BJ (cell line): ENCODE measurements at regions of chr11 and their contacts with region 1.

Region 1: DNA sequence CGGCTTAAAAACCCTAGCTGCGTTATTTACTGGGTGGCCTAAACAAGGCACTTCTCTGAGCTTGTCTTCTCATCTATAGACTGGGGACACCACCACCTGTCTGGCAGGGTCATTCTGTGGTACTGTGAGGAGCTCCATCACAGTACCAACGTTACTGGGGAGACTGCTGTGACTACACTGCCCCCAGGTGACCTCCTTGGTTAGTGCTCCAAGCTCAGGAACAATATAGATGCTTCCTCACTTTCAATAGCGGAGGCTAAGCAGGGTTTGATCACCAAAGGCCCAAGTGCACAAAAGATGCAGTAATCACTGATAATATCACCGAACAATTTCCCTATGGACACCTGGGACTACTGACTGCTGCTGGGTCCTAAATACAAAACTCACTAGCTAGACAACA is 18.8 kb downstream of the PRPF19 start:
- DNase-seq: no peak
- H3K4me3 ChIP-seq: no peak overlapping the region
- H3K27me3 ChIP-seq: no peaks in the 10 kb centered on the region
- CTCF ChIP-seq: peak; percentile 72

Region 2: GRCh38 chr11:60775420-60775961 is 112.1 kb before region 1 on chr11:
- CTCF ChIA-PET with region 1: interaction called, 36 read pairs
- POLR2A ChIA-PET with region 1: no interaction called
- DNase-seq: peak; percentile 50
- H3K4me3 ChIP-seq: no peak overlapping the region
- H3K27me3 ChIP-seq: peaks cover 1% of the 10 kb centered on the region; the same call in 1 of the 2 replicates
- CTCF ChIP-seq: peak; percentile 92

Region 3: DNA sequence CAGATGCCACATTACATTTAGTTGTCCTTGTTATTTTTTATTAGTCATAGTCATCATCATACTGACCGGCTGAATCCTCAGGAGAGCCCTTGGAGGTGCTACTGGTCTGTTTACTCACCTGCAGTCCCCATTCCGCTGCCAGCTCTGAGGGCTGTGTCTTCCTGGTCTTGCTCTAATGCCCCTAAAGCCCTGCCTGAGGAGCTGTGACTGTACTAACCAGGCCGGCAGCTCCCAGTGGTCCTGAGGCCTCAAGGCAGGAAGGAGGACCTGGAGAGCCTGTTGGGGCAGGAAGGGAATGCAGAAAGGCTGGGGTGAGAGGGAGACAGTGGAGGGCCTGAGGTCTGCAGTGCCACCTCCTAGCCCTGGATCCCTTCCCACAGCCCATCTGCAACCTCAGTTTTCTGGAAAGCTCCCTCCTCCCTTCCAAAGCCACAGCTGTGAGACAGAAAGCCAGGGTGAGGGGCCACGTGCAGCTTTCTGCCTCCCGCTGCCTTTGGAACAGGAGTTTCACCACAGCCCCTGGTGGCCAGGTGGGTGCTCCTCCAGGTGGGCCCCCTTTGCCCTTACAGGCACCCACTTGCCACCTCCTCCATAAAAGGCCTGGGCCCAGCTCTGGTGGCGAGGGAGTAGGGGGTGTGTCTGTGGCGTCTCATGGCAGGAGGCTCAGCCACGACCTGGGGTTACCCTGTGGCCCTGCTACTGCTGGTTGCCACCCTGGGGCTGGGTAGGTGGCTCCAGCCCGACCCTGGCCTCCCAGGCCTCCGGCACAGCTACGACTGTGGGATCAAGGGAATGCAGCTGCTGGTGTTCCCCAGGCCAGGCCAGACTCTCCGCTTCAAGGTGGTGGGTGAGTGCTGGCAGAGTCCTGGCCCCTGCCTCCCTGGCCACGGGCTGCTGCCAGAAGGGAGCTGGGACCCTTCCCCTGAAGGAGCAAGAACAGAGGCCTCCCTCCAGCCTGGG is 20.4 kb before region 1 on chr11 and contains the start of gene ZP1:
- CTCF ChIA-PET with region 1: interaction called, 20 read pairs
- POLR2A ChIA-PET with region 1: no interaction called
- DNase-seq: no peak
- H3K4me3 ChIP-seq: no peak within 1 kb of the TSS
- H3K27me3 ChIP-seq: no peaks in the 10 kb centered on the region; the same call in 1 of the 2 replicates
- CTCF ChIP-seq: no peak
- polyA plus RNA-seq, gene ZP1: 0.36 and 0.67 TPM in 2 replicates

Region 4: DNA sequence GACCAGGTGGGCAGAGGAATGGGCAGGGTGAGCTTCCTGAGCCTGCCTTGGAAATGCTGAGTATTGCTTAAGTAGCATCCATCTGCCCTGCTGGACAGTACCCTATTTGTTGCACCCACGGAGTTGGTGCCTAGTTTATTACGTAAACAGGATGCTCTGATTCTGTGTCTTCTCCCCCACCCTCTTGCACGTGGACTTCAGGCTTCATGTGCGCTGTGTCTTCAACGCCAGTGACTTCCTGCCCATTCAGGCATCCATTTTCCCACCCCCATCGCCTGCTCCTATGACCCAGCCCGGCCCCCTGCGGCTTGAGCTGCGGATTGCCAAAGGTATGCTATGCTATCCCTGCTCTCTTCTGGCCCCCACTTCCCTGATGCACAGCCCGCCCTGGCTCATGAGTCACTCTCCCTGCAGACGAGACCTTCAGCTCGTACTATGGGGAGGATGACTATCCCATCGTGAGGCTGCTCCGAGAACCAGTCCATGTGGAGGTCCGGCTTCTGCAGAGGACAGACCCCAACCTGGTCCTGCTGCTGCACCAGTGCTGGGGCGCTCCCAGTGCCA is 14.5 kb before region 1 on chr11:
- CTCF ChIA-PET with region 1: interaction called, 20 read pairs
- POLR2A ChIA-PET with region 1: no interaction called
- DNase-seq: peak; percentile 21
- H3K4me3 ChIP-seq: no peak overlapping the region
- H3K27me3 ChIP-seq: no peaks in the 10 kb centered on the region
- CTCF ChIP-seq: no peak

Region 5: DNA sequence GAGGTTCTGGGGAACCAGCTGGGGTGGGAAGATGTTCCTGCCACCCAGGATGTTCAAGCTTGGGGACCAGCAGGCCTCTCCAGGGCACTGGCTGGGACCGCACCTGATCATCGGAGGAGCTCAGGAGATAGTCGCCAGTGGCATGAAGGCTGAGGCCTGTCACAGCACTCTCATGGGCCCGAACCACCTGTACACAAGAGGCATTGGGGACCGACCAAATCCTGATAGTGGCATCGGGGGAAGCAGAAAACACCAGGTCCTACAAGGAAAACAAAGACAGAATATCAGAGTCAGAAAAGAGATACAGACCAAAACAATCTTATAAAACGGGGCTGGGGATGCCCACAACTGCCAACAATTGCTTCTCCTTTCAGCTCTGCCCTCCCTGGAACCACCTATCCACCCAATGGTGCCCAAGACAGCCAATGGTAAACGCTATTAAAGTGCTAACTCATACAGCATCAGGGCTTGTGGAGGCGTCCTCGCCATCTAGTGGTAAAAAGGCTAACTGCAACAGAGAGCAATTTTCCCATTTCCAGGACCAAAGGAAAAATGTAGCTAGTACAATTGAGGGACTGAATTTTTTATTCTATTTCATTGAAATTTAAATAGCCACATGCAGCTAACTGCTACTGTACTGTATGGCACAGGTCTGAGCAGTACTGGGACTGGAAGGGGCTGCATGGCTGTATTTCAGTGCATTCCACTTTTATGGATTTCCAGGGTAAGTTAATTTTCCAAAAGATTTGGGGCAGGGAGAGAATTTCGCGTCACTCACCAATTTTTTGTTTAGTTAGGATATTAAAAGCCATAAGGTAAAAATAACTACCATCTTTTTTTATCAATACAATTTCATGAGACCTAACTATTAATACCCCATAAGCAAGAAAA is 11.7 kb after region 1 on chr11:
- CTCF ChIA-PET with region 1: interaction called, 35 read pairs
- POLR2A ChIA-PET with region 1: no interaction called
- DNase-seq: no peak
- H3K4me3 ChIP-seq: no peak overlapping the region
- H3K27me3 ChIP-seq: no peaks in the 10 kb centered on the region
- CTCF ChIP-seq: peak; percentile 95

Region 6: GRCh38 chr11:60906132-60906972 is 18.8 kb after region 1 on chr11 and contains the start of gene PRPF19:
- CTCF ChIA-PET with region 1: interaction called, 26 read pairs
- POLR2A ChIA-PET with region 1: no interaction called
- DNase-seq: peak; percentile 80
- H3K4me3 ChIP-seq: peak within 1 kb of the TSS; percentile 75
- H3K27me3 ChIP-seq: 0 out of 2 replicates have a peak, but pooled peaks cover 3% of the 10 kb centered on the region
- CTCF ChIP-seq: no peak
- polyA plus RNA-seq, gene PRPF19: 17.6 and 48.6 TPM in 2 replicates